ENCODE measurements at regions of chr12 and their contacts with region 1.

Region 1: GRCh38 chr12:92570056-92570753 is 132.6 kb upstream of the PLEKHG7 start:
- DNase-seq: peak; percentile 87
- H3K4me3 Mint-ChIP-seq: no peak overlapping the region
- H3K27ac Mint-ChIP-seq: no peak overlapping the region
- H3K4me1 Mint-ChIP-seq: peaks cover 21% of the 10 kb centered on the region
- H3K27me3 Mint-ChIP-seq: no peaks in the 10 kb centered on the region

Region 2: DNA sequence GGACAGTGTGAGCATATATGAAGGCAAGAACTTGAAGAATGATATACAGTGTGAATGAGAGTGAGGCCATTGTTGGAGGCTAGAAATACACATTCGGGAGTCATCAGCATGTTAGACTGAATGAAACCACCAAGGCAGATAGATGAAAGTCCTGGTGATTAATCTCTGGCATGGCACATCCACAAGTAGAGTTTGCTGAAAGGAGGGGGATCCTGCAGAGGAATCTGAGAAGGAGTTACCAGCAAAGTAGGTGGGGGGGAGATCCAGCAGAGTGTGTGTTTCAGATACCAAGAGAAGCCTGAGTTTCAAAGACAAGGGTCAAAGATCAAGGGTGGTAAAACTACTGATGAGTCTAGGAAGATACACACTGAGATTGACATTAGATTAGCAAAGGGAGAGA is 960.9 kb before region 1 on chr12:
- intact Hi-C with region 1: no loop called
- DNase-seq: no peak
- H3K4me3 Mint-ChIP-seq: no peak overlapping the region
- H3K27ac Mint-ChIP-seq: no peak overlapping the region
- H3K4me1 Mint-ChIP-seq: peaks cover 5% of the 10 kb centered on the region
- H3K27me3 Mint-ChIP-seq: no peaks in the 10 kb centered on the region

Region 3: DNA sequence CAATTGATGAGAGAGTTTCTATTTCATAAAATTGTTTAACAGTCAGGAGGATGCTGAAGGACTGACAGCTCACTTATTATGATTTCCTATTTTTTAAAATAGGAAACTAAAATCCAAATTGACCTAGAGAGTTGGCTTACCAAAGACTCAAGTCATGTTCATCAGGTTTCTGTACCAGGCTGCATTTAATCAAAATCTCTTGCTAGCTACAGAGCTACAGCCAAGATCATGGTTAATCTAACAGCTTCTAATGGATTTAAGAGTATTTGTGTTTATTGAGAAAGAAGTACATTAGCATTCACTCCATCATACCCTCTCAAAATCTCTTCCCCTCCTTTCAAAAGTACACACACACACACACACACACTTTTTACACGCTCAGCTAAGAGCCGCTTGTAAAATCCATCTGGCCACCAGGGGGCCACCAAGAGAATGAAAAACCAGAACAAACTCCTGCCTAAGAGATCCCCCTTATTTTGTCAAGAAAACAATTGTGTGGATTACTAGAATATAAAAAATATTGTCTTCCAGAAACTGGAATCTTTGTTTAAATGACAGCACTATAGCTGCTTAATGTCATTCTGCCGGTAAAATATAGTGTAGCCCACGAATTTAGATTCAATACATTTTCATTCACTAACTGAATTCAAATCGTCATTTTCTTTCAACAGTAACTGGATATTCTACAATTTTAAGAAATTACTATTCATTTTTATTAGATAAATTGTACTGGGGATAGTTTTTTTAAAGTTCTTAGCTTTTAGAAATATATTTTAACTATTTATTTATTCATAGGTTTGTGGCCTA is 758.5 kb before region 1 on chr12:
- intact Hi-C with region 1: loop called (anchors 5 kb)
- DNase-seq: peak; percentile 89
- H3K4me3 Mint-ChIP-seq: no peak overlapping the region
- H3K27ac Mint-ChIP-seq: no peak overlapping the region
- H3K4me1 Mint-ChIP-seq: peaks cover 6% of the 10 kb centered on the region
- H3K27me3 Mint-ChIP-seq: no peaks in the 10 kb centered on the region

Region 4: GRCh38 chr12:92185052-92185451 is 385.2 kb before region 1 on chr12:
- intact Hi-C with region 1: loop called (anchors 2 kb)
- DNase-seq: peak; percentile 85
- H3K4me3 Mint-ChIP-seq: peak overlapping the region; percentile 59
- H3K27ac Mint-ChIP-seq: peak overlapping the region; percentile 77
- H3K4me1 Mint-ChIP-seq: peaks cover 51% of the 10 kb centered on the region
- H3K27me3 Mint-ChIP-seq: no peaks in the 10 kb centered on the region

Region 5: DNA sequence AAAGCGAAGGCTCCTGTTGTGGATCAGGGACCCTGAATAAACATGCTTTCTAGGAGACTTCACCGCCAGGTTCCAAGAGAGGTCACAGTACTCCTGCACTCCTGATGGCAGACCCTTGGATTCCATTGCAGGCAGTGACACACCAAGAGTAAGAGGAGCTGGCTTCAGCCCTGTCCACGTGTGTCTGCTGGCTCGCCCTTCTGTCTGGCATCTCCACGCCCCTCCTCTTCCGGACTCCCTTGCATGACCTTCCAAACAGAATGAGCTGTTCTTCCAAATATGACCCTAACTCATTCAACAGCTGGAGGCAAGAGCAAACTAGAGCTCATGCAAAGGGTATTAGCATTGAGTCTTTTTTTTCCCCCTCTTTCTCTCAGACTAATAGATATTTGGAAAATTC is 100.4 kb before region 1 on chr12:
- intact Hi-C with region 1: loop called (anchors 1 kb)
- DNase-seq: no peak
- H3K4me3 Mint-ChIP-seq: no peak overlapping the region
- H3K27ac Mint-ChIP-seq: peak overlapping the region; percentile 66
- H3K4me1 Mint-ChIP-seq: peaks cover 26% of the 10 kb centered on the region
- H3K27me3 Mint-ChIP-seq: no peaks in the 10 kb centered on the region

Region 6: DNA sequence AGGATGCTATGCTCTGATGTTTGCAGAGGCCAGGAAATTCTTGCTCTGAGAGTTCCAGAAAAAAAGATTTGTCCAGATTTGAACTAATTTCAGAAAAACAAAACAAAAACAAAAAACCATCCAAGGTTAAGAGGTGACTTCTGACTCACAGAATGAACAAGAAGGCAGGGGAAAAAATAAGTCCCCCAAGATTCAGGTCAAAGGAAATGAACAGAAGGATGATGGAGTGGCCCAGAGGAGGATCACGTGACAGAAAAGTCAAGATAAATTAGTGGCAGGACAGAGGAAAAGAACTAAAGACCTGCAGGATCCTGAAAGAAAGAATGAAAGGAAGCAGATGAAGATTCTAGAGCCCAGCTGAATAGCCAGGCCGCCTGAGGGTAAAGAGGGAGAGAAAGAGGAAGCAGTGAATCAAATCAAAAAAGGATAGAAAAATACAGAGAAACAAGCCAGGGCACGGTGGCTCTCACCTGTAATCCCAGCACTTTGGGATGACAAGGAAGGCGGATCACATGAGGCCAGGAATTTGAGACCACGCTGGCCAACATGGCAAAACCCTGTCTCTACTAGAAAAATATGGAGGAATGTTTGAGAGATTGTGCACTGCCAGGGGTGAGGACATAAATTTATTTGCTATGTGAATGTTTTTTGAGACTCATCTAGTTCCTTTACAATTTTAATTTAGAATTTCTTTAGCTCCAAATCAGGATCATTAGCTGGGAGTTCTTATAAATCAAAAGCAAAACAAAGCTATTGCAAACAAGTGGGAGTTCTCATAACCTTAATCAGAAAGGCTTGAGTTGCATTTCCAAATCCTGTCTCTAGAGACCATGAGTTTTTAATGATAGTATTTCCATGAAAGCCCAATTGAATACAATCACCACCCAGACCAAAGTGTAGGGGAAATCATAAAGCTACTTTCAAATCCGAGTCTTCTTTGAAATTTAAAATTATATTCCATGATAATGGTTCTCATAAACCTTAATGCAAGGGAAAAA is 84.6 kb before region 1 on chr12:
- intact Hi-C with region 1: no loop called
- DNase-seq: no peak
- H3K4me3 Mint-ChIP-seq: no peak overlapping the region
- H3K27ac Mint-ChIP-seq: peak overlapping the region; percentile 34
- H3K4me1 Mint-ChIP-seq: peaks cover 22% of the 10 kb centered on the region
- H3K27me3 Mint-ChIP-seq: no peaks in the 10 kb centered on the region

Region 7: DNA sequence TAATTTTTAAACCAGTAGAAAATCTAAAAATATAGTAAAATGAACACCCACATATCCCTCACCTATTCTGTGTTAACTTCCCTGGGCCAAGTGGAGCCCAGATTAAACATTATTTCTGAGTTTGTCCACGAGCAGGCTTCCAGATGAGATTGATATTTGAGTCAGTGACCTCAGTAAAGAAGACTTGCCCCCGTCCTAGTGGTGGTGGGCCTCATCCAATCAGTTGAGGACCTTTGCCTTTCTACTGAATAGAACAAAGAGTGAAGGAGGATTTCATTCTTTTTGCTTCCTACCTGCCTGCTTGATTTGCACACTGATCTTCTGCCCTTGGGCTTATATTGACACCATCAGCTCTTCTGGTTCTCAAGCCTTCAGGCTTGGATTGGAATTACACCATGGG is 42.1 kb before region 1 on chr12:
- intact Hi-C with region 1: no loop called
- DNase-seq: no peak
- H3K4me3 Mint-ChIP-seq: no peak overlapping the region
- H3K27ac Mint-ChIP-seq: no peak overlapping the region
- H3K4me1 Mint-ChIP-seq: peaks cover 19% of the 10 kb centered on the region
- H3K27me3 Mint-ChIP-seq: no peaks in the 10 kb centered on the region

Region 8: GRCh38 chr12:92539113-92539749 is 31.0 kb before region 1 on chr12:
- intact Hi-C with region 1: loop called (anchors 1 kb)
- DNase-seq: peak; percentile 69
- H3K4me3 Mint-ChIP-seq: peak overlapping the region; percentile 74
- H3K27ac Mint-ChIP-seq: peak overlapping the region; percentile 97
- H3K4me1 Mint-ChIP-seq: peaks cover 64% of the 10 kb centered on the region
- H3K27me3 Mint-ChIP-seq: no peaks in the 10 kb centered on the region

Region 9: DNA sequence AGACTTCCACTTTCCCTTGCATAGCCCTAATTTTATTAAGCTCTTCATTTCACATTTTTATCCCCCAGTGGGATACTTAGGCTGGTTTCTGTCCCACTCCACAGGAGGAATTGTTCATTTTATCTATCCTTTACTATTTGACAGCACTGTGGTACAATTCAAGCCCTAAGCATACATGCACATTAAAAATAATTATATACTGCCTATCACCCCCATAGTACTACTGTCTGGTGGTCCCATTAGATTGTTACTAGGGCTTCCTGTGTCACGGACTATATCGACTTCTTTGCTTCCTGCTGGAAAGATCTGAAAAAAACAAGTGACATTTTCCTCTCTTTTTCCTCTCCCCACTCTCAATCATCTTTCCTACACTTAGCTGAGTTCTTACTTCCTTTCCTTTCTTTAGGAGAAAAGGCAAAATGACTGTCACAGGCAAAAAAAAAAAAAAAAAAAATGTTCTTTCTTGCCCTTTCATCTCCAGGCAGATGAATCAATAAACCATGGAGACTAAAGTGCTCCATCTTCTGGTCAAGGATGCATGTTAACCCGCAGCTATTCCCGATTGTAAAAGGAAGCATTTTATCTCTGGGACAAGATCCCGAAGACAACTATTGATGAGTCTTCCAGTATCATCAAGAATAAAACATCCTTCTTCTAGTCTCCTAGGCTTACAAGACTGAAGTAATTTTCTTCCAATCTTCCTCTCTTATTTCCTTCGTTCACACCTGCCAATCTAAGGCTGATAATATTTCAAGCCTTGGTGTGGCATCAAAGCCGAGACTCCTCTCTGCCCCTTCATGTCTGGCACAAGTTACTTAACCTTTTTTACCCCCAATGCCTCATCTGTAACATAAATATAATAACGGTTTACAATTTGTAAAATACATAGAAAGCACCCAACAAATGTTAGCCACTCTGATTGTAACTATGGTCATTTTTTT is 38.2 kb after region 1 on chr12:
- intact Hi-C with region 1: loop called (anchors 1 kb)
- DNase-seq: no peak
- H3K4me3 Mint-ChIP-seq: peak overlapping the region; percentile 26
- H3K27ac Mint-ChIP-seq: no peak overlapping the region
- H3K4me1 Mint-ChIP-seq: peaks cover 19% of the 10 kb centered on the region
- H3K27me3 Mint-ChIP-seq: no peaks in the 10 kb centered on the region